PC-3 (cell line): ENCODE measurements at regions of chr9 and their contacts with region 1.

Region 1: GRCh38 chr9:125038166-125038565 is 97.3 kb upstream of the GOLGA1 start:
- DNase-seq: no peak
- ATAC-seq: no peak
- H3K4me3 ChIP-seq: no peak overlapping the region
- H3K27ac ChIP-seq: no peak overlapping the region
- H3K4me1 ChIP-seq: no peaks in the 10 kb centered on the region
- H3K27me3 ChIP-seq: no peaks in the 10 kb centered on the region
- CTCF ChIP-seq: no peak

Region 2: GRCh38 chr9:125061391-125061790 is 23.2 kb after region 1 on chr9:
- CTCF ChIA-PET with region 1: no interaction called
- POLR2A ChIA-PET with region 1: no interaction called
- intact Hi-C with region 1: no loop called
- DNase-seq: no peak
- ATAC-seq: no peak
- H3K4me3 ChIP-seq: no peak overlapping the region
- H3K27ac ChIP-seq: no peak overlapping the region
- H3K4me1 ChIP-seq: no peaks in the 10 kb centered on the region
- H3K27me3 ChIP-seq: no peaks in the 10 kb centered on the region
- CTCF ChIP-seq: no peak

Region 3: GRCh38 chr9:125176636-125177035 is 138.5 kb after region 1 on chr9:
- CTCF ChIA-PET with region 1: no interaction called
- POLR2A ChIA-PET with region 1: no interaction called
- intact Hi-C with region 1: no loop called
- DNase-seq: no peak
- ATAC-seq: no peak
- H3K4me3 ChIP-seq: no peak overlapping the region
- H3K27ac ChIP-seq: no peak overlapping the region
- H3K4me1 ChIP-seq: no peaks in the 10 kb centered on the region
- H3K27me3 ChIP-seq: no peaks in the 10 kb centered on the region
- CTCF ChIP-seq: no peak

Region 4: GRCh38 chr9:125442452-125442851 is 404.3 kb after region 1 on chr9:
- CTCF ChIA-PET with region 1: no interaction called
- POLR2A ChIA-PET with region 1: interaction called, 13 read pairs
- intact Hi-C with region 1: no loop called
- DNase-seq: no peak
- ATAC-seq: no peak
- H3K4me3 ChIP-seq: no peak overlapping the region
- H3K27ac ChIP-seq: no peak overlapping the region
- H3K4me1 ChIP-seq: no peaks in the 10 kb centered on the region
- H3K27me3 ChIP-seq: no peaks in the 10 kb centered on the region
- CTCF ChIP-seq: no peak